Endothelial cell of umbilical vein (primary cell): ENCODE measurements at regions of chr2 and their contacts with region 1.

Region 1: GRCh38 chr2:201654616-201655384 is 11.5 kb upstream of the TMEM237 start:
- DNase-seq: peak; percentile 89
- H3K4me3 ChIP-seq: peak overlapping the region in 1 of 3 experiments; percentile 24
- H3K27ac ChIP-seq: peak overlapping the region; percentile 94
- H3K4me1 ChIP-seq: peaks cover 31% of the 10 kb centered on the region
- H3K27me3 ChIP-seq: no peaks in the 10 kb centered on the region
- CTCF ChIP-seq: no peak
- POLR2A ChIP-seq: peak; percentile 30

Region 2: DNA sequence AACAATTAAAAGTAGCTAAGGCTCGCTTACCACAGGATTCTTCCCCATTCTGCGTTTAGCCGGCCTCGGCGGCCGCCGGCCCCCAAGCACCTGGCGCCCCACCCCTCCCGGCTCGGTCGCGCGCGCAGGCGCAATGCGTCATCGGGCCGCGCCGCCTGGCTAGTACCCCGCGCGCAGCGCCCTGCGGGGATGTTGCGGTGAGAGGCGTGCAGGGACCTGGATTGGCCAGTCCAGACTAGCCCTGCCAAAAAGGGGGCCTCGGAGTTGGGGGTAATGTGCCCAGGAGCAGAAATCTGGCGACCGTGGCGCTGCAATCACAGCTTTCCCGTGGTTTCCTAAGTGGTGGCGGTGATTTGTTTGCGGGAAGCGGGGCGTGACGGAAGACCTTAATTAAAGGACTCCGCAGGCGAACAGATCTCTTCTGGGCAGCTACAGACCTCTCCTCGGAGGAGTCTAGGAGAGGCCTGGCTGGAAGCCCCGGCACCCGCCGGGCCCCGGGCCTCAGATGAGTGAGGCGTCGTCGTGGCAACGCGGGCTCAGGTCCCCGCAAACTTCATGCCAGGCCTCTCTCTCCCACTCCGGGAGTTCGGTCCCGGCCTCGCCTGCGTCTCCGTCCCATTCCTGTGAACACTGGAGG is 12.1 kb before region 1 on chr2:
- CTCF ChIA-PET with region 1: interaction called, 4 read pairs
- POLR2A ChIA-PET with region 1: no interaction called
- dilution Hi-C with region 1: no loop called
- intact Hi-C with region 1: loop called (anchors 1 kb)
- DNase-seq: peak; percentile 85
- H3K4me3 ChIP-seq: peak overlapping the region; percentile 62 to 93 (median 77)
- H3K27ac ChIP-seq: peak overlapping the region; percentile 87
- H3K4me1 ChIP-seq: peaks cover 12% of the 10 kb centered on the region
- H3K27me3 ChIP-seq: no peaks in the 10 kb centered on the region
- CTCF ChIP-seq: peak in 1 of 2 donors; percentile 7
- POLR2A ChIP-seq: peak; percentile 74